Tibial artery (tissue), 4 donors: ENCODE measurements at regions of chr11 and their contacts with region 1.

Region 1: DNA sequence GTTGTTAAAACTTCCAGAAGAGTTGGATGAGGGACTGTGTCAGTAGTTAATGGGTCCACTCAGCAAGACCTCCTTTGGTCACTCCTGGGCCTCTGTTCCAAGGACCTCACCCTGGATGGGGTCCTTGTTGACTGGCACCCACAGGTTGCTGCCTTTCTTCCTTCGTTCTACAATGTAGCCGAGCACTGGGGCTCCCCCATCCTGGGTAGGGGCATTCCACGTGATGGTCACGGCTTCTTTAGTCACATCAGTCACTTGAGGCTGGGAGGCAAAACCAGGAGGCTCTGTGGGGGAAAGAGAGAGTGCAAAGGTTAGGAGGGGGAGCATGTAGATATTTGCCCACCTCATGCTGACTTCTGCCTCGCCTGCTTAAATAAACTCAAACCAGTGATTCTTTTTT is 12.0 kb downstream of the TMEM86A start:
- DNase-seq: no peak
- H3K4me3 ChIP-seq: no peak overlapping the region
- H3K27ac ChIP-seq: no peak overlapping the region
- H3K4me1 ChIP-seq: peaks cover 0 to 16% (median 4%) of the 10 kb centered on the region in 4 donors
- H3K27me3 ChIP-seq: no peaks in the 10 kb centered on the region
- CTCF ChIP-seq: no peak

Region 2: GRCh38 chr11:18115360-18116127 is 595.0 kb before region 1 on chr11:
- intact Hi-C with region 1: loop called (anchors 10 kb)
- DNase-seq: peak in 1 of 2 donors; percentile 32
- H3K4me3 ChIP-seq: no peak overlapping the region
- H3K27ac ChIP-seq: no peak overlapping the region
- H3K4me1 ChIP-seq: no peaks in the 10 kb centered on the region
- H3K27me3 ChIP-seq: peaks cover 0 to 15% of the 10 kb centered on the region in 2 donors
- CTCF ChIP-seq: peak; percentile 71 to 82

Region 3: DNA sequence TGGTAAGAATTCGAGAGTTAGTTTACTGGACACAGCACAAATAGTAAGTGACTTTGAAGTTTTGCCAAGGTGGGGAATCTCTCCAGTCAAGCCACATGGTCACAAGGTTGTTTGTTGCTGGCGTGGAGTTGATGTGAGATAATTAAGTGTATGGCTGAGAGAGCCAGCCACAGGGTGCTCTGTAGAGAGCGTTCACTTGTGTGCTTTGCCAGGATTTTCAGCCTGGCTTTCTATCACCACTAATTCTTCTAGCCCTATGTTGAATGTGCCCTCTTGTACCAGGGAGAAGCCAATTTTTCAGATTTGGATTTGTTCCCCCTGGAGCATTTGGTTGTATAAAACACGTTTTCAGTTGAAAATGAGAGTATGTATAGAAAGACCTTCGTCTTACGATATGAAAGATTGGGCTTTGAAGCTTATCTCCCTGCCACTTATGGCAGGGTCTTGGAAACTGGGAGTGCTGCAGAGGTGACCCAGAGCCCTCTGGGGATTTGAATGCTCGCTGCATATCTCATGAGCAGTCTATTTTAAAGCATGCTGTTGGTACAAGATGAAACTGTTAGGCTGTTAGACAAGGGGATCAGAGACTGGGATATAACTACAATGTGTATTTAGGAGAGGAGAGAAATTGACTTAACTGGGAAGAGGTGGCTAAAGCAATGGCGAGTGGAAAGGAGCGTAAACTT is 462.6 kb after region 1 on chr11:
- intact Hi-C with region 1: no loop called
- DNase-seq: no peak
- H3K4me3 ChIP-seq: no peak overlapping the region
- H3K27ac ChIP-seq: no peak overlapping the region
- H3K4me1 ChIP-seq: no peaks in the 10 kb centered on the region
- H3K27me3 ChIP-seq: no peaks in the 10 kb centered on the region
- CTCF ChIP-seq: no peak